ENCODE measurements at regions of chr11 and their contacts with region 1.

Region 1: GRCh38 chr11:33257897-33258630 is 883 bp downstream of the HIPK3 start:
- DNase-seq: peak; percentile 93
- ATAC-seq: peak; percentile 90

Region 2: GRCh38 chr11:33161120-33162005 is 96.7 kb before region 1 on chr11 and contains the start of gene CSTF3:
- intact Hi-C with region 1: loop called (anchors 2 kb)
- DNase-seq: peak; percentile 100
- ATAC-seq: peak; percentile 99
- total RNA-seq, gene CSTF3: 12.6 TPM

Region 3: GRCh38 chr11:33291004-33291777 is 33.1 kb after region 1 on chr11:
- intact Hi-C with region 1: loop called (anchors 2 kb)
- DNase-seq: no peak
- ATAC-seq: peak; percentile 94

Region 4: GRCh38 chr11:33317662-33318061 is 59.6 kb after region 1 on chr11:
- intact Hi-C with region 1: loop called (anchors 2 kb)
- DNase-seq: no peak
- ATAC-seq: no peak

Region 5: DNA sequence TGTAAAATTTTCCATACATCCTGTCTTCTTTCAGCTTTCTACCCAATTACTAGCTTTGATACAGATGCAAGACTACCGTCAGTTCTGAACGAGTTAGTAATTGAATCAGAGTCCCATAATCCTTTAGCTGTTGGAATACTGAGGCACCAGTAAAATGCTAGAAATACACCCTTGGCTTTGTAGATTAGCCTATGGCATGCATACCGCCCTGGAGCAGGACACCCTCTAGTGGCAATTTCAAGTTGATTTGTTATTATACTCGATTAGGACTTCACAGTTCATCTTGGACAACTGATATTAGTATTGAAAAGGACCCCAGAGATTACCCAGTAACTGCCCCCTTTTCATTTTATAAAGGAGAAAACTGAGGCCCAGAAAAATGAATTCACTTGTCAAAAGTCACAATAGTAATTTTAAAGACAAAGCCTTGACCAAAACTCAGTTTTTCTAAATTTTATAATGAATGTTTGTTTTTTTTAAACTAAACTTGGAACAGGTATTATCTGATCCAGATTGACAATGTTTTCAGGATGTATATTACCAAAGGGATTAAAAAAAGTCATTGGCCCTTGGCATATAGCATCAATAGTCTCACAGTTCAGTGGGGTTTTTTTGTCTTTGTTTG is 71.8 kb after region 1 on chr11:
- intact Hi-C with region 1: loop called (anchors 2 kb)
- DNase-seq: no peak
- ATAC-seq: peak; percentile 51

Region 6: GRCh38 chr11:33687733-33688479 is 429.8 kb after region 1 on chr11:
- intact Hi-C with region 1: loop called (anchors 10 kb)
- DNase-seq: no peak
- ATAC-seq: no peak